Spleen (tissue), 13 donors: ENCODE measurements at regions of chr6 and their contacts with region 1.

Region 1: GRCh38 chr6:44074439-44075136 is 52.7 kb downstream of the MRPL14 start:
- DNase-seq: peak; percentile 89
- H3K4me3 ChIP-seq: peak overlapping the region in 2 of 8 donors; percentile 45 to 76
- H3K27ac ChIP-seq: no peak overlapping the region
- H3K4me1 ChIP-seq: peaks cover 13 to 47% (median 32%) of the 10 kb centered on the region in 6 donors
- H3K27me3 ChIP-seq: peaks cover 0 to 71% (median 21%) of the 10 kb centered on the region in 7 donors
- CTCF ChIP-seq: peak; percentile 72 to 90 (median 87)
- POLR2A ChIP-seq: no peak

Region 2: DNA sequence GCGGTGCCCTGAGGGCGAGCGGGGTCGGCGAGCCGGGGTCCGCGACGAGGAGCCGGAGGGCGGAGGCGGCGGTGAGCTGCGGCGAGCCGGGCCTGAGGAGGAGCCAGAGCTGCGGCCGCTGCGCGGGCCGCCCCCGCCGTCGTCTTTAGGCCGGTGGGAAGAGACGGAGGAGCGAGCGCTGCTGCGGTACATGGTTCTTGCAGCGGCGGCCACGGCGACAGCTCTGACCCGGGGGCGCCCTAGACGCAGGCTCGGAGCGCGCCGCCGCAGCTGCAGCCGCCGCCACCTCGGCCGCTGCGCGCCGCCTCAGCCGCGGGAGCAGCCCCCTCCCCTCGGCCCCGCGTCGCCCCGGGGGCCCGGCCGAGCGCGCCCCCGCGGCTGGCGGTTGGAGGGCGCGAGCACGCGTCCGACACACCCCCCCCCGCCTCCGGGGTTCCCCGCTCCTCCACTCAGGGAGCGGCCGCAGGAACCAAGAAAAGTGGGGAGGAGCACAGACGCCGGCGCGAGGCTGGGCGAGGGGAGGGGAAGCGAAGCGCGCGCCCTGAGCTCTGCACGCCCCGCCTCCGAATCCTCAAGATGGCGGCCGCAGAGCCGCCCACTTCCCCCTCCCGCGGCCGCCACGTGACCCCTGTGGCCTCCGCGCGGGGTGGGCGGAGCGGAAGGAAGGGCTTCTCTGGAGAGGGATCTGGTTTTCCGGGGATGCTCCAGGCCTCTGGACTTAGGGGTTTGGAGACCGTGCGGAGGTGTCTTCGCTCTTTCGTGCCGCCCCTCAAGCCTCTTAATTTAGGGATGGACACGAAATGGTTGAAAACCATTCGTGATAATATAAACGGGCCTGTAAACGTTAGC is 705.2 kb before region 1 on chr6 and contains the start of gene ZNF318:
- intact Hi-C with region 1: no loop called
- DNase-seq: peak; percentile 99
- H3K4me3 ChIP-seq: peak within 1 kb of the TSS; percentile 64 to 92 (median 76)
- H3K27ac ChIP-seq: peak within 1 kb of the TSS; percentile 78 to 96 (median 92)
- H3K4me1 ChIP-seq: peaks cover 14 to 78% (median 40%) of the 10 kb centered on the region in 6 donors
- H3K27me3 ChIP-seq: no peaks in the 10 kb centered on the region
- CTCF ChIP-seq: peak in 2 of 11 experiments; percentile 24 to 36
- POLR2A ChIP-seq: peak in 2 of 3 donors; percentile 31 to 39
- total RNA-seq, gene ZNF318: 28.9 to 56.9 (median 39.5) TPM

Region 3: DNA sequence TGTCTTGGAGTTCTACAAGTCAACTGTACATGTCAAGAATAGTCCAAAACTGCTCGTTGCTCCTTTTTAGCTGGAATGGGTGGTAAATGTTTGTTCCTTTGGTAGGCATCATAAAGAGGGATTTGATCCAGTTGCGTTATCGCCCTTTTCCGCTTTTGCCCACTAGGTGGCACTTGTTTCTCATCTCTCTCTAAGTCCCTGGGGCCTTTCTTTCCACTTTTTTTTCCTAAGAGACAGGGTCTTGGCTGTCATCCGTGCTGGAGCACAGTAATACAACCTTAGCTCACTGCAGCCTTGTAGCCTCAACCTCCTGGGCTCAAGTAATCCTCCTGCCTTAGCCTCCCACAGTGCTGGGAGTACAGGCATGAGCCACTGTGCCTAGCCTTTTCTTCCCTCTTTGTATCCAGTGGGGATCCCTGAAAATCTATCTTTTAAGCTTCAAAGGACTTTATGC is 466.3 kb before region 1 on chr6:
- intact Hi-C with region 1: loop called (anchors 5 kb)
- DNase-seq: no peak
- H3K4me3 ChIP-seq: no peak overlapping the region
- H3K27ac ChIP-seq: peak overlapping the region in 2 of 8 donors; percentile 25 to 36
- H3K4me1 ChIP-seq: peaks cover 0 to 14% (median 8%) of the 10 kb centered on the region in 6 donors
- H3K27me3 ChIP-seq: no peaks in the 10 kb centered on the region
- CTCF ChIP-seq: peak; percentile 30 to 86 (median 77)
- POLR2A ChIP-seq: no peak

Region 4: GRCh38 chr6:43667245-43668150 is 407.1 kb before region 1 on chr6:
- intact Hi-C with region 1: loop called (anchors 5 kb)
- DNase-seq: peak; percentile 93
- H3K4me3 ChIP-seq: peak overlapping the region in 1 of 8 donors; percentile 37
- H3K27ac ChIP-seq: peak overlapping the region in 7 of 8 donors; percentile 14 to 72 (median 62)
- H3K4me1 ChIP-seq: peaks cover 11 to 56% (median 26%) of the 10 kb centered on the region in 6 donors
- H3K27me3 ChIP-seq: peaks cover 0 to 5% (median 0%) of the 10 kb centered on the region in 7 donors
- CTCF ChIP-seq: peak; percentile 93 to 98 (median 96)
- POLR2A ChIP-seq: no peak

Region 5: DNA sequence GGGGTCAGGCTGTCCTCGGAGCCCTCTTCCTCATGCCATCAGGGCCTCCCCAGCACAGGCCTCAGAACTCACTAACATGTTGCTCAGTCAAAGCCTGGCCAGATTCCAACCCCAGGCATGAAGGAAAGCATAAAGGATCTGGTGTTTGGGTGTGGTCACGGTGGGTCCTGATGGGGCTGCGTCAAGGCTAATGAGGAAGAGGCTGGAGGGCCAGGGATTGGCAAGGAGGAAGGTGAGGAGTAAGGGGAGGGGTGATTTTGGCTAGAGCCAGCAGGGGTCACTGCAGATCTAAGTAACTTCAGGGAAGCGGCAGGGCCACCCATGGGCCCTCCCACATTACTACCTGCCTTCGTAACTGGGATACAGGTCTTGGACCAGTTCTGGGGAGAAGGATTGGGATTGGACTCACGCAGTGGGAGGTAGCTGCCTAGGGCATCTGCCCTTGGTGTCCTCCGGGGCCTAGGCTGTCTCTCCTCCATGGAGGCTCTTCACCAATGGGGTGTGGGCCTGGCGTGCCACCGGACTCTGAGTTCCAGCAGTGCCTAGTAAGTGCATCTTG is 350.8 kb before region 1 on chr6:
- intact Hi-C with region 1: loop called (anchors 5 kb)
- DNase-seq: peak; percentile 87
- H3K4me3 ChIP-seq: peak overlapping the region in 1 of 8 donors; percentile 2
- H3K27ac ChIP-seq: peak overlapping the region in 6 of 8 donors; percentile 2 to 76 (median 46)
- H3K4me1 ChIP-seq: peaks cover 13 to 32% (median 23%) of the 10 kb centered on the region in 6 donors
- H3K27me3 ChIP-seq: peaks cover 0 to 14% (median 0%) of the 10 kb centered on the region in 7 donors
- CTCF ChIP-seq: peak; percentile 32 to 83 (median 74)
- POLR2A ChIP-seq: no peak

Region 6: GRCh38 chr6:43769526-43770416 is 304.8 kb before region 1 on chr6 and contains the start of gene VEGFA:
- intact Hi-C with region 1: loop called (anchors 2 kb)
- DNase-seq: peak; percentile 97
- H3K4me3 ChIP-seq: peak within 1 kb of the TSS; percentile 60 to 89 (median 80)
- H3K27ac ChIP-seq: peak within 1 kb of the TSS; percentile 42 to 94 (median 90)
- H3K4me1 ChIP-seq: peaks cover 8 to 64% (median 41%) of the 10 kb centered on the region in 6 donors
- H3K27me3 ChIP-seq: peaks cover 0 to 61% (median 8%) of the 10 kb centered on the region in 7 donors
- CTCF ChIP-seq: peak; percentile 85 to 97 (median 94)
- POLR2A ChIP-seq: peak in 1 of 3 donors; percentile 58
- total RNA-seq, gene VEGFA: 112 to 486 (median 203) TPM